GM12878 (cell line): ENCODE measurements at regions of chr18 and their contacts with region 1.

Region 1: DNA sequence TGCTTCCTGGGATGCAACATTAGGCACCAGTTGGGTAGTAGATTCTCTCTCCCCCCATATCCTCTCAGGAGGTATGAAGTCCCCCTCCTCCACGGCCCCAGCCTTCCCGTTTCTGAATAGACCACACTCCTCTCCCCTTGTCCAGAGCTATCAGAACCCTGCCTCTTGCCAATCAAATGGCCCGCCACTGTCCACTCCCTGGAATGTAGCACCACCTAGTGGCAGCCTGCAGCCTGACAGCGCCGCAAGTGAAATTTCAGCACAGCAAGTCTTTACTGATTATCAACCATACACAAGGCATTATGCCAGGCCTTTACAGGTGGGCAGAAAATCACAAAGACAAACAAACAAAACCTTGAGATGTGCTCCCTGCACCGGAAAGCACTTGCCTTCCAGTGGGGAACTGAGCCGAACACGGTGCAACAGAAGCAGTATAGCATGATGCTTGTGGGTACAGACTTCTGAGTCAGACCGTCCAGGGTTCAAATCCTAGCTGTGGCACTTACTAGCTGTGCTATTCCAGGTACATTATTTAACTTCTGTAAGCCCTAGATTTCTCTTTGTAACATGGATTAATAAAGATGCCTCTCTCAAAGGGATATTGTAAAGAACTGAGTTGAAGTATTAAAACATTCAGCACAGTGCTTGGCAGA is 174.0 kb downstream of the SMAD2 start:
- DNase-seq: no peak
- ATAC-seq: peak; percentile 88
- H3K4me3 ChIP-seq: no peak overlapping the region
- H3K27ac ChIP-seq: no peak overlapping the region
- H3K4me1 ChIP-seq: no peaks in the 10 kb centered on the region
- H3K27me3 ChIP-seq: no peaks in the 10 kb centered on the region; a peak in 1 of 4 replicates
- CTCF ChIP-seq: peak; percentile 88 to 98 (median 94)
- EP300 ChIP-seq: no peak
- POLR2A ChIP-seq: no peak
- RAD21 ChIP-seq: peak; percentile 78

Region 2: GRCh38 chr18:47595815-47596496 is 160.5 kb before region 1 on chr18:
- CTCF ChIA-PET with region 1: interaction called, 18 read pairs
- POLR2A ChIA-PET with region 1: no interaction called
- RAD21 ChIA-PET with region 1: interaction called, 3 read pairs
- SMC1A ChIA-PET with region 1: no interaction called
- in situ Hi-C with region 1: no loop called
- intact Hi-C with region 1: no loop called
- DNase-seq: peak; percentile 8
- ATAC-seq: peak; percentile 78
- H3K4me3 ChIP-seq: no peak overlapping the region
- H3K27ac ChIP-seq: no peak overlapping the region
- H3K4me1 ChIP-seq: no peaks in the 10 kb centered on the region
- H3K27me3 ChIP-seq: peaks cover 0 to 6% of the 10 kb centered on the region in 2 experiments; a peak in 2 of 4 replicates
- CTCF ChIP-seq: peak; percentile 67 to 76 (median 68)
- EP300 ChIP-seq: no peak
- POLR2A ChIP-seq: no peak
- RAD21 ChIP-seq: peak; percentile 84

Region 3: DNA sequence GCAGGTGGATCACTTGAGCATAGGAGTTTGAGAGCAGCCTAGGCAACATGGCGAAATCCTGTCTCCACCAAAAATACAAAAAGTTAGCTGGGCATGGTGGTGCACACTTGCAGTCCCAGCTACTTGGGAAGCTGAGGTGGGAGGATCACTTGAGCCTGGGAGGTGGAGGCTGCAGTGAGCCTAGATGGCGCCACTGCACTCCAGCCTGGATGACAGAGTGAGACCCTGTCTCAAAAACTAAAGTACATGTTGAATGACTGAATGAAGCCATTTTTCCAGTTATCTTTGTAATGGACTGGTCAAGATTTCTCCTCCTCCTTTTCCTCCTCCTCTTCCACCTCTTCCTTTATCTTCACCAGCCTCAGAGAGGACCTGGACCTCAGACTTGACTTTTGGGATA is 98.0 kb before region 1 on chr18:
- CTCF ChIA-PET with region 1: no interaction called
- POLR2A ChIA-PET with region 1: no interaction called
- RAD21 ChIA-PET with region 1: no interaction called
- SMC1A ChIA-PET with region 1: no interaction called
- in situ Hi-C with region 1: no loop called
- intact Hi-C with region 1: no loop called
- DNase-seq: no peak
- ATAC-seq: no peak
- H3K4me3 ChIP-seq: no peak overlapping the region
- H3K27ac ChIP-seq: no peak overlapping the region
- H3K4me1 ChIP-seq: no peaks in the 10 kb centered on the region
- H3K27me3 ChIP-seq: no peaks in the 10 kb centered on the region
- CTCF ChIP-seq: no peak
- EP300 ChIP-seq: no peak
- POLR2A ChIP-seq: no peak
- RAD21 ChIP-seq: no peak

Region 4: GRCh38 chr18:47772374-47773248 is 16.1 kb after region 1 on chr18:
- CTCF ChIA-PET with region 1: interaction called, 10 read pairs
- POLR2A ChIA-PET with region 1: no interaction called
- RAD21 ChIA-PET with region 1: no interaction called
- SMC1A ChIA-PET with region 1: no interaction called
- in situ Hi-C with region 1: no loop called
- intact Hi-C with region 1: no loop called
- DNase-seq: no peak
- ATAC-seq: peak; percentile 87
- H3K4me3 ChIP-seq: no peak overlapping the region
- H3K27ac ChIP-seq: no peak overlapping the region
- H3K4me1 ChIP-seq: no peaks in the 10 kb centered on the region
- H3K27me3 ChIP-seq: no peaks in the 10 kb centered on the region
- CTCF ChIP-seq: peak; percentile 88 to 99 (median 91)
- EP300 ChIP-seq: no peak
- POLR2A ChIP-seq: no peak
- RAD21 ChIP-seq: peak; percentile 89